K562 (cell line): ENCODE measurements at regions of chr10 and their contacts with region 1.

Region 1: GRCh38 chr10:101161494-101162299 is 30.6 kb downstream of the TLX1 start:
- DNase-seq: peak; percentile 67 to 74 (median 70)
- ATAC-seq: peak; percentile 90
- H3K4me3 ChIP-seq: no peak overlapping the region
- H3K27ac ChIP-seq: no peak overlapping the region
- H3K4me1 ChIP-seq: no peaks in the 10 kb centered on the region
- H3K27me3 ChIP-seq: no peaks in the 10 kb centered on the region; a peak in 1 of 5 replicates
- CTCF ChIP-seq: peak; percentile 80 to 90 (median 86)
- EP300 ChIP-seq: no peak
- POLR2A ChIP-seq: no peak
- RAD21 ChIP-seq: peak; percentile 69 to 81

Region 2: GRCh38 chr10:101031128-101031795 is 130.4 kb before region 1 on chr10 and contains the starts of genes PDZD7 and SFXN3:
- CTCF ChIA-PET with region 1: no interaction called
- POLR2A ChIA-PET with region 1: no interaction called
- in situ Hi-C with region 1: no loop called
- intact Hi-C with region 1: no loop called
- DNase-seq: peak; percentile 88 to 97 (median 96)
- ATAC-seq: peak; percentile 98
- H3K4me3 ChIP-seq: peak within 1 kb of the TSS; percentile 21
- H3K27ac ChIP-seq: no peak within 1 kb of the TSS
- H3K4me1 ChIP-seq: peaks cover 12 to 45% of the 10 kb centered on the region in 2 experiments
- H3K27me3 ChIP-seq: peaks cover 2 to 4% of the 10 kb centered on the region in 2 experiments; a peak in 4 of 5 replicates
- CTCF ChIP-seq: no peak
- EP300 ChIP-seq: no peak
- POLR2A ChIP-seq: no peak
- RAD21 ChIP-seq: no peak
- polyA plus RNA-seq, gene PDZD7: not detected
- polyA plus RNA-seq, gene SFXN3: 0.24 to 0.31 TPM

Region 3: GRCh38 chr10:101291331-101292193 is 129.9 kb after region 1 on chr10:
- CTCF ChIA-PET with region 1: interaction called, 7 read pairs
- POLR2A ChIA-PET with region 1: no interaction called
- in situ Hi-C with region 1: loop called (anchors 5 kb)
- intact Hi-C with region 1: loop called (anchors 5 kb)
- DNase-seq: peak; percentile 67 to 78 (median 76)
- ATAC-seq: peak; percentile 92
- H3K4me3 ChIP-seq: peak overlapping the region; percentile 36
- H3K27ac ChIP-seq: no peak overlapping the region
- H3K4me1 ChIP-seq: peaks cover 0 to 17% of the 10 kb centered on the region in 2 experiments; a peak in 3 of 5 replicates
- H3K27me3 ChIP-seq: peaks cover 0 to 42% of the 10 kb centered on the region in 2 experiments; a peak in 3 of 5 replicates
- CTCF ChIP-seq: peak; percentile 58 to 83 (median 65)
- EP300 ChIP-seq: no peak
- POLR2A ChIP-seq: no peak
- RAD21 ChIP-seq: peak; percentile 18 to 60; a peak in 2 of 4 replicates